HEK293T (cell line): ENCODE measurements at regions of chr15 and their contacts with region 1.

Region 1: GRCh38 chr15:40893733-40894688 is at the start of gene VPS18:
- DNase-seq: peak; percentile 88

Region 2: GRCh38 chr15:40857601-40858341 is 36.2 kb before region 1 on chr15:
- CTCF ChIA-PET with region 1: interaction called, 65 read pairs
- POLR2A ChIA-PET with region 1: interaction called, 31 read pairs
- DNase-seq: peak; percentile 82

Region 3: DNA sequence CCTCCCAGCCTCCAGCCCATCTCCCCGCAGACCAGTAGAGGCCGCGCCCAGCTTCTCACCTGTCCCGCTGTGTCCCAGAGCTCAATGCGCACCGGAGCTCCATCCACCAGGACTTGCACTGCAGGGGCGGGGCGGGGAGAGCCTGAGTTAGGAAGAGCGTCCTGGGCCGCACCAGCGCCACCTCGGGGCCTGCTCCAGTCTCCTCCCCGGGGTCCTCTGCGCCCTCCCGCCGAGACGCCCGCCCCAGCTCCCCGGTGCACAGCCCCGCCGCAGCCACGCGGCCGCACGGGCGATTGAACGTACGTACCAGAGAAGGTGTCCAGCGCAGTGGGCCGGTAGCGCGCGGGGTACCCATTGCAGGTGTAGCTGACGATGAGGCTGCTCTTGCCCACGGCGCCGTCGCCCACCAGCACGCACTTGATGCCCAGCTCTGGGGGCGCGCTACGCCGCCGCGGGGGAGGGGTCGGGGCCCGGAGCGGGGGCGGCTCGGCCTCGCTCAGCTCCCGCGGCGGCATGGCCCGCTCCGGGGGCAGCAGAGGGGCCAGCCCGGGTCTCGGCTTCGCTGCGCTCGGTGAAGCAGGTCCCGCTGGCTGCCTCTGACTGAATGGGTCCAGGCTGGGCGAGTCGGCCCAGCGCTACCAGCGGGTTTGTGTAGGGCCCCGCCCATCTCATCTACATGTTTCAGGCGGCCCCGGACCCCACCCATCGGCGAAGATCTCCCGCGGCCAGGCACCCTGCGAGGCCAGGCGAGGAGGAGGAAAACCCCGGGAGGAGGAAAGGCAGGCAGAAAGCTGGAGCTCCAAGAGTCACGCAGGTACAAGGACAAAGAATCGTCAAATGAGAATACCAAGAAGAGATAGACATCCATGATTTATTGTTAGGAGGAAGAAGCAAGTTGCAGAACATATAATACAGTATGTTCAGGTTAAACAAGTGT is 20.1 kb before region 1 on chr15 and contains the start of gene RHOV:
- CTCF ChIA-PET with region 1: interaction called, 18 read pairs
- POLR2A ChIA-PET with region 1: interaction called, 12 read pairs
- DNase-seq: peak; percentile 67

Region 4: GRCh38 chr15:40906091-40906990 is 12.3 kb after region 1 on chr15:
- CTCF ChIA-PET with region 1: interaction called, 32 read pairs
- POLR2A ChIA-PET with region 1: interaction called, 8 read pairs
- DNase-seq: peak; percentile 78